Prostate gland (tissue), 2 donors: ENCODE measurements at regions of chr20 and their contacts with region 1.

Region 1: GRCh38 chr20:57654363-57654997 is 34.3 kb upstream of the ZBP1 start:
- DNase-seq: peak; percentile 55
- H3K4me3 ChIP-seq: no peak overlapping the region
- H3K27ac ChIP-seq: peak overlapping the region; percentile 26 to 73
- H3K4me1 ChIP-seq: peaks cover 12% of the 10 kb centered on the region
- H3K27me3 ChIP-seq: no peaks in the 10 kb centered on the region
- CTCF ChIP-seq: peak; percentile 77 to 92 (median 90)
- POLR2A ChIP-seq: no peak

Region 2: DNA sequence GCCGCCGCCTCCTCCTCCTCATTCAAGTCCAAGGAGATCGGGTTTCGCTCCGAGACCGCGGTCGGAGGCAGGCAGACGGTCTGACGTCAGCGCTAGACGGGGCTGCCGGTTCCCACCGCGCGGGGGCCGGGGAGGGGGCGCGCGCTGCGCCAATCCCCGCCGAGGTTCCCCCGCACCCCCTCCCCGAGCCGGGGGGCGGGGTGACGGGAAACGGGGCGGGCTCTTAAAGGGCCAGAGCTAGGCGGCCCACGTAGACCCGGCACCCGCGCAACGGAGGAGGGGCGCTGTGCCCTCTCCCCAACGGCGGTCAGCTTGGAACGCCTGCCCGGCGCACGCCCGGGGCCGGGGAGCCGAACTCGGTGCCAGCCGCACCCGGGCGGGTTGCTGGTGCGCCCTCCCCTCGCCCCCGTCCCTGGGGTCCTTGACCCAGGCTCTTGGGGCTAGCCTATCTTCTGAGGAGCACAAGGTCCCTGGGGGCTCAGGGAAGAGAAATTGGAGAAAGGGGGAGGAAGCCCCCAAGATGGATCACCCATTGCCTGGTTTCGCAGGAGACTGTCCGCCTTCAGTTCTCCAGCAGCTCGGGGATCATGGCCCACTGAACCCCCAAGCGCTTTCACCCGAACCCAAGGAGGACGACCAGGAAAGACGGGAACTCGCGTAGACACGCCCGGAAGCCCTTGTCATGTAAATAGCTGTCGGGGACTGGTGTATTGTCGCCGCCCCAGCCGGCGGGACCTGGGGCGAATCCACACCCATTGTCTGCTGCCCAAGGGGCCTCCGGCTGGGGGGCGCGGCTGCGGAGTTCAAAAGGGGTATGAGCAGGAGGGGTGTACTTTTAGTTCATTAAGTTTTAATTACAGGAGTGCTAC is 55.7 kb after region 1 on chr20 and contains the start of gene PMEPA1:
- intact Hi-C with region 1: loop called (anchors 5 kb)
- DNase-seq: peak; percentile 95
- H3K4me3 ChIP-seq: peak within 1 kb of the TSS; percentile 78 to 81
- H3K27ac ChIP-seq: peak within 1 kb of the TSS; percentile 98 to 99
- H3K4me1 ChIP-seq: no peaks in the 10 kb centered on the region
- H3K27me3 ChIP-seq: no peaks in the 10 kb centered on the region
- CTCF ChIP-seq: peak in 2 of 4 experiments; percentile 34 to 73
- POLR2A ChIP-seq: peak; percentile 95
- total RNA-seq, gene PMEPA1: 96.5 to 245 TPM

Region 3: DNA sequence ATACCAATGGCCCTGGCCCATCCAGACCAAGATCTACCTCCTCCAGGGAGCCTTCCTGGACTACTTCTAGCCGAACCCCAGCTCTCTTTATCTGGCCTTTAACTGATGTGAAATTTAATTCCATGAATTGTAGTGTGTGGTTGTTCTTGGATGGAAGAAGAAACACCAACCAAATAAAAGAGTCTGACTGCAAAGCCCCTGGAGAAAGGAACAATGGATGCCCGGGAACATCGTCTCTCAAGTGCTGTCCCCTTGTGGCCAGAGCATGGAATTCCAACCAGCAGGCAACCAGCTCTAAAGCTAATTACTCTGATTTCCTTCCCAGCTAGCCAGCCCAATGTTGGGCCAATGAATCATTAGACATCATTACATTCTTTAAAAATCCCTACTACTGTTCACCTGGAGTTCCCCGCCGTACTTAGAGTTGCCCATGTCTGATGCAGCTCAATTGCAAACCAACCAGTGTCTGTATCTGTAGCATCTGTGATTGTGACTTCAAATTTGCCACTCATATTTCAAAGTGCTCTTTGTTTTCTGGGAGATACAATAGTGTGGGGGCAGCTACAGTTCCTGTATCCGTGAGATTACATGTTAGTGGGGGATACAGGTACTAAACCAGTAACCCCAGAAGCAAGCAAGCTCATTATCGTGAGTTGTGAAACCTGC is 432.8 kb after region 1 on chr20:
- intact Hi-C with region 1: loop called (anchors 2 kb)
- DNase-seq: peak; percentile 41
- H3K4me3 ChIP-seq: no peak overlapping the region
- H3K27ac ChIP-seq: peak overlapping the region; percentile 15 to 22
- H3K4me1 ChIP-seq: no peaks in the 10 kb centered on the region
- H3K27me3 ChIP-seq: no peaks in the 10 kb centered on the region
- CTCF ChIP-seq: peak; percentile 76 to 92 (median 80)
- POLR2A ChIP-seq: no peak

Region 4: DNA sequence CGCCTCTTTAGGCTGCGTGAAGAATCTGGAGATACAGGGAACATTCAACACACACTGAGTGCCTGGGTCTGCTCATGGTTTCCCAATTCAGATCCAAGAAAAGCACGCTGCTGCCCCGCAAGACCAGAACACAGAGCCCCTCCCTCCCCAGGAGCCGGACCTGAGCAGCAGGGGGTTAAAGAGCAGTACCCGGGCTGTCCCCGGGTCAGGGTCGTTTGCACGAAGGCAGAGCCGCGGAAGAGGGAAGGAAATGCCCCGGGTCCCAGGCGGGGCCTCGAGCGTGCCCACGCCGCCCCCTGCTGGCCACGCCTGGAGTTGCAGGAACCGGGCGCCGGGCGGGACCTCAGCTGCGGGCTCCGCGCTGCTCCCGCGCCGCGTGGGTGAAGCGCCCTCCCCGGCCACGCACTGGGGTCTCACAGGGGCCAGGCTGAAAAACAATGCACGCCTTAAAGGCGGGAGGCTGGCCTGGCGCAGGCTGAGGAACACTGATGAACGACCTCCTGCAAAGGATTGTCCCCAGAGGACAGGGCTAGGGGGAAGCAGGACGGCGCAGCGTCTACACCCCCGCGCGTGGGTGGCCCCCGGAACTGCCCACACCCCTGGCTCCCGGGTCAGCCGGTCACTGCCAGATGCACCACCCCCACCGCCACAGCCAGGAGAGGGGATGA is 525.1 kb after region 1 on chr20:
- intact Hi-C with region 1: loop called (anchors 2 kb)
- DNase-seq: peak; percentile 46
- H3K4me3 ChIP-seq: peak overlapping the region; percentile 17 to 38
- H3K27ac ChIP-seq: peak overlapping the region; percentile 52 to 53
- H3K4me1 ChIP-seq: no peaks in the 10 kb centered on the region
- H3K27me3 ChIP-seq: no peaks in the 10 kb centered on the region
- CTCF ChIP-seq: peak; percentile 97 to 99 (median 98)
- POLR2A ChIP-seq: no peak